Activated T-helper 1 cell treated with anti-CD3 and anti-CD28 coated beads, Interleukin-12 subunit alpha, Interleukin-12 subunit beta, Interleukin-2, Interleukin-4 antibody, amounts not matched to agents 30 ng/mL and 10 ng/mL and 1 ng/mL, durations not matched to agents 14 hours and 24 hours and 36 hours (primary cell): ENCODE measurements at regions of chr16 and their contacts with region 1.

Region 1: GRCh38 chr16:50152807-50153452 is at the start of gene TENT4B:
- DNase-seq: peak; percentile 86
- H3K4me3 Mint-ChIP-seq: peak within 1 kb of the TSS; percentile 92
- H3K27ac Mint-ChIP-seq: peak within 1 kb of the TSS; percentile 94
- H3K4me1 Mint-ChIP-seq: peaks cover 41% of the 10 kb centered on the region
- H3K27me3 Mint-ChIP-seq: no peaks in the 10 kb centered on the region
- total RNA-seq, gene TENT4B: 19.8 and 20.0 TPM in 2 replicates

Region 2: DNA sequence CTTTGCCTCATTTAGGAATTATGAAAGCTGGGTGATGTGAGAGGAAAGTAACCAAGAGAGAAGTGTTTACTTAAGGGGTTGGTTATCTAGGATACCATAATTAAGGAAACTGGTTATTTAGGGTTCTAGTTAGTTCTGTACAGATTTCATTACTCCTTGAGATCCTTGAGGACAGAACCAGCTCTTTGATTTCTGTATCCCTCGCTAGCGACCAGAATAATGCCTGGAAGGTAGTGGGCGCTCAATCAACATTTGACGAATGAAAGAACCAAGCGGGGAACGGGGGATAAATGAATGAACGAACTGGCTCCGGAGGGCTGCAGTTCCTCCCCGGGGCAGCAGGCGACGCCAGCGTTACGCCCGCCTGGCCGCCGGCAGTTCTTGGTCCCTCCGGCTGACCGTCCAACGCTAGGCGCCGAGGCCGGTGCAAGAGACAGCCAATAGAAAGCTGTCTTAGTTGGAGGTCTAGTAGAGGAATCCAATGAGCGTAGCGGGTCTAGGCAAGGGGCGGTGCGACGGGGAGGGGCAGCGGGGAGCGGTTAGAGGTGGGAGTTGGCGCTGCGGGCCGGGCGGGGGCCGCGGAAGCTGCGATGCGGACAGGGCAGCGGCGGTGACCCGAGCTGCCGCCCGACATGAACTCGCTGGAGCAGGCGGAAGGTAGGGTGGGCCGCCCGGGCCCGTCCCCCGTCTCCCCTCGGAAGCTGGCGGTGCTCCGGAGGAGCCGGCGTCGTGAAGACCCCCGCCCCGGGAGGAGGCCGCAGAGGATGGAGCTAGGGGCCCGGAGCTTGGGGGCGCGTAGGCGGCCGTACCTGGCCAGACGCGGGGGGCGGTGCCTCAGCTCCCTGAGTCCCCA is 128.0 kb before region 1 on chr16 and contains the start of gene CNEP1R1:
- intact Hi-C with region 1: loop called (anchors 1 kb)
- DNase-seq: peak; percentile 92
- H3K4me3 Mint-ChIP-seq: peak within 1 kb of the TSS; percentile 96
- H3K27ac Mint-ChIP-seq: peak within 1 kb of the TSS; percentile 84
- H3K4me1 Mint-ChIP-seq: peaks cover 26% of the 10 kb centered on the region
- H3K27me3 Mint-ChIP-seq: peaks cover 11% of the 10 kb centered on the region
- total RNA-seq, gene CNEP1R1: 21.9 and 22.7 TPM in 2 replicates

Region 3: GRCh38 chr16:50102051-50102746 is 50.7 kb before region 1 on chr16:
- intact Hi-C with region 1: loop called (anchors 1 kb)
- DNase-seq: no peak
- H3K4me3 Mint-ChIP-seq: no peak overlapping the region
- H3K27ac Mint-ChIP-seq: peak overlapping the region; percentile 75
- H3K4me1 Mint-ChIP-seq: peaks cover 18% of the 10 kb centered on the region
- H3K27me3 Mint-ChIP-seq: no peaks in the 10 kb centered on the region

Region 4: GRCh38 chr16:50166511-50167500 is 13.9 kb after region 1 on chr16:
- intact Hi-C with region 1: no loop called
- DNase-seq: no peak
- H3K4me3 Mint-ChIP-seq: peak overlapping the region; percentile 51
- H3K27ac Mint-ChIP-seq: peak overlapping the region; percentile 78
- H3K4me1 Mint-ChIP-seq: peaks cover 35% of the 10 kb centered on the region
- H3K27me3 Mint-ChIP-seq: no peaks in the 10 kb centered on the region

Region 5: GRCh38 chr16:50273681-50274325 is 120.9 kb after region 1 on chr16:
- intact Hi-C with region 1: loop called (anchors 2 kb)
- DNase-seq: peak; percentile 20
- H3K4me3 Mint-ChIP-seq: peak overlapping the region; percentile 95
- H3K27ac Mint-ChIP-seq: peak overlapping the region; percentile 98
- H3K4me1 Mint-ChIP-seq: peaks cover 95% of the 10 kb centered on the region
- H3K27me3 Mint-ChIP-seq: no peaks in the 10 kb centered on the region

Region 6: GRCh38 chr16:50368410-50369132 is 215.6 kb after region 1 on chr16 and contains the start of gene BRD7:
- intact Hi-C with region 1: loop called (anchors 1 kb)
- DNase-seq: peak; percentile 56
- H3K4me3 Mint-ChIP-seq: peak within 1 kb of the TSS; percentile 96
- H3K27ac Mint-ChIP-seq: peak within 1 kb of the TSS; percentile 94
- H3K4me1 Mint-ChIP-seq: peaks cover 51% of the 10 kb centered on the region
- H3K27me3 Mint-ChIP-seq: no peaks in the 10 kb centered on the region
- total RNA-seq, gene BRD7: 88.8 and 91.0 TPM in 2 replicates

Region 7: GRCh38 chr16:50681021-50681885 is 528.3 kb after region 1 on chr16 and contains the start of gene SNX20:
- intact Hi-C with region 1: loop called (anchors 2 kb)
- DNase-seq: peak; percentile 41
- H3K4me3 Mint-ChIP-seq: peak within 1 kb of the TSS; percentile 82
- H3K27ac Mint-ChIP-seq: peak within 1 kb of the TSS; percentile 85
- H3K4me1 Mint-ChIP-seq: peaks cover 90% of the 10 kb centered on the region
- H3K27me3 Mint-ChIP-seq: no peaks in the 10 kb centered on the region
- total RNA-seq, gene SNX20: 34.3 TPM in 2 replicates

Region 8: GRCh38 chr16:50806099-50807062 is 653.5 kb after region 1 on chr16:
- intact Hi-C with region 1: loop called (anchors 1 kb)
- DNase-seq: peak; percentile 78
- H3K4me3 Mint-ChIP-seq: peak overlapping the region; percentile 66
- H3K27ac Mint-ChIP-seq: peak overlapping the region; percentile 30
- H3K4me1 Mint-ChIP-seq: peaks cover 9% of the 10 kb centered on the region
- H3K27me3 Mint-ChIP-seq: no peaks in the 10 kb centered on the region